ENCODE measurements at regions of chr17 and their contacts with region 1.

Region 1: DNA sequence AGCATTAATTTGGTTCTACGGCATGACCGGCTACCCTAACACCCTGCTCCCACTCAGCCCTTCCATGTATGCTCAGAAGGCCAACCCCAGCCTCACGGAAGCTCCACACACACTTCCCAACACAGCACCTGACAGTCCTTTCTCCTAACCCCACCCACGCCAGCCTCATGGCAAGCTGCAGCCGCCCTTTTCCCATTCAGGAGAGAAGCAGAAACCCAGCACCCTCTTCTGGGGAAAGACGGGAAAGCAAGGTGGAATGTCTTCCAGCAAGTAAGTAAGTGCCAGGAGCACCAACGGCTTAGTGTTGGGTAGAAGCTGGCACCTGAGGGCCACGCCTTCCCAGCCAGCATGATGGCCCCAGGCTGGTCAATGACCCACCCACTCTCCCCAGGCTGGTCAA is 32.1 kb downstream of the ABR start:
- DNase-seq: peak; percentile 71
- ATAC-seq: peak; percentile 96
- H3K4me3 ChIP-seq: no peak overlapping the region
- H3K27ac ChIP-seq: no peak overlapping the region
- H3K4me1 ChIP-seq: peaks cover 5 to 15% of the 10 kb centered on the region in 2 experiments
- H3K27me3 ChIP-seq: no peaks in the 10 kb centered on the region
- CTCF ChIP-seq: peak; percentile 68 to 90 (median 75)
- POLR2A ChIP-seq: no peak
- RAD21 ChIP-seq: peak; percentile 94

Region 2: GRCh38 chr17:1022278-1023024 is 125.2 kb before region 1 on chr17:
- CTCF ChIA-PET with region 1: no interaction called
- POLR2A ChIA-PET with region 1: no interaction called
- RAD21 ChIA-PET with region 1: no interaction called
- intact Hi-C with region 1: no loop called
- DNase-seq: no peak
- ATAC-seq: no peak
- H3K4me3 ChIP-seq: no peak overlapping the region
- H3K27ac ChIP-seq: no peak overlapping the region
- H3K4me1 ChIP-seq: no peaks in the 10 kb centered on the region
- H3K27me3 ChIP-seq: no peaks in the 10 kb centered on the region
- CTCF ChIP-seq: no peak
- POLR2A ChIP-seq: no peak
- RAD21 ChIP-seq: no peak

Region 3: GRCh38 chr17:1137465-1137894 is 10.2 kb before region 1 on chr17:
- CTCF ChIA-PET with region 1: interaction called, 15 read pairs
- POLR2A ChIA-PET with region 1: no interaction called
- RAD21 ChIA-PET with region 1: no interaction called
- intact Hi-C with region 1: no loop called
- DNase-seq: peak; percentile 92
- ATAC-seq: peak; percentile 80
- H3K4me3 ChIP-seq: peak overlapping the region; percentile 65 to 69
- H3K27ac ChIP-seq: peak overlapping the region; percentile 77
- H3K4me1 ChIP-seq: peaks cover 5 to 17% of the 10 kb centered on the region in 2 experiments; a peak in 3 of 4 replicates
- H3K27me3 ChIP-seq: no peaks in the 10 kb centered on the region
- CTCF ChIP-seq: no peak
- POLR2A ChIP-seq: peak; percentile 84
- RAD21 ChIP-seq: no peak

Region 4: GRCh38 chr17:1304962-1305563 is 157.4 kb after region 1 on chr17:
- CTCF ChIA-PET with region 1: no interaction called
- POLR2A ChIA-PET with region 1: no interaction called
- RAD21 ChIA-PET with region 1: no interaction called
- intact Hi-C with region 1: no loop called
- DNase-seq: no peak
- ATAC-seq: no peak
- H3K4me3 ChIP-seq: no peak overlapping the region
- H3K27ac ChIP-seq: no peak overlapping the region
- H3K4me1 ChIP-seq: no peaks in the 10 kb centered on the region
- H3K27me3 ChIP-seq: no peaks in the 10 kb centered on the region
- CTCF ChIP-seq: no peak
- POLR2A ChIP-seq: no peak
- RAD21 ChIP-seq: no peak

Measured in HCT116 (cell line).